ENCODE measurements at regions of chr1 and their contacts with region 1.

Region 1: DNA sequence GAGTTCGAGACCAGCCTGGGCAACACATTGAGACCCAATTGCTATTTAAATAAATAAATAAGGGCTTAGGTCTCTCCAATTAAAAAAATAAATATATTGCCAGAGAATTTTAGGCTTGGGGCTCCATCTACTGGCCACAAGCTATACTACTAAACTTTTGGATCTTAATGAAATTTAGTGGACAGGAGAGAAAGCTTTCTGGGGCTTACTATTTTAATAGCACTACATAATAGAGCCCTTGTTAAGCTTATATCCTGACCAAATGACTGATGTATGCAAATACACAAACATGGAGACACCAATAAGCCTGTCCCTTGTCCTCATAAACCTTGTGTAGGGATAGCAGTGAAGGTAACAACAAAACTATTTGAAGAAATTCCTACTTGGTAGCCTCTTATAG is 18.4 kb downstream of the CCT3 start:
- DNase-seq: peak in 3 of 5 donors; percentile 13 to 33 (median 27)
- H3K4me3 ChIP-seq: no peak overlapping the region
- H3K4me3 Mint-ChIP-seq: no peak overlapping the region
- H3K27ac ChIP-seq: no peak overlapping the region
- H3K27ac Mint-ChIP-seq: no peak overlapping the region
- H3K4me1 ChIP-seq: no peaks in the 10 kb centered on the region
- H3K4me1 Mint-ChIP-seq: peaks cover 0 to 2% (median 0%) of the 10 kb centered on the region in 4 donors
- H3K27me3 ChIP-seq: no peaks in the 10 kb centered on the region
- H3K27me3 Mint-ChIP-seq: no peaks in the 10 kb centered on the region

Region 2: DNA sequence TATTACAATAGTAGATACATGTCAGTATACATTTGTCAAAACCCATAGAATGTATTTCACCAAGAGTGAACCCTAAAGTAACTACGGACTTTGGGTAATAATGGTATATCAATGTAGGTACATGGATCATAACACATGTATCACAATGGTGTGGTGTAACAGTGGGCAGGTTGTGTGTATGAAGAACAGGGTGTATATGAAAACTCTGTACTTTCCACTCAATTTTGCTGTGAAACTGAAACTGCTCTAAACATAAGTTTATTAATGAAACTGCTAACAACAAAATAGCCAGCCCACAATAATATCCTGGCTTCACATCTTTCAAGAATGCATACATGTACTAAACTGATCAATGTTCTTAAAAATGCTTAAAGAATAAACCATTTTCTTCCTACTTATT is 908.7 kb before region 1 on chr1:
- CTCF ChIA-PET with region 1: no interaction called
- POLR2A ChIA-PET with region 1: no interaction called
- intact Hi-C with region 1: no loop called
- DNase-seq: no peak
- H3K4me3 ChIP-seq: no peak overlapping the region
- H3K4me3 Mint-ChIP-seq: no peak overlapping the region
- H3K27ac ChIP-seq: no peak overlapping the region
- H3K27ac Mint-ChIP-seq: peak overlapping the region in 1 of 7 donors; percentile 51
- H3K4me1 ChIP-seq: no peaks in the 10 kb centered on the region
- H3K4me1 Mint-ChIP-seq: no peaks in the 10 kb centered on the region
- H3K27me3 ChIP-seq: no peaks in the 10 kb centered on the region
- H3K27me3 Mint-ChIP-seq: no peaks in the 10 kb centered on the region

Region 3: DNA sequence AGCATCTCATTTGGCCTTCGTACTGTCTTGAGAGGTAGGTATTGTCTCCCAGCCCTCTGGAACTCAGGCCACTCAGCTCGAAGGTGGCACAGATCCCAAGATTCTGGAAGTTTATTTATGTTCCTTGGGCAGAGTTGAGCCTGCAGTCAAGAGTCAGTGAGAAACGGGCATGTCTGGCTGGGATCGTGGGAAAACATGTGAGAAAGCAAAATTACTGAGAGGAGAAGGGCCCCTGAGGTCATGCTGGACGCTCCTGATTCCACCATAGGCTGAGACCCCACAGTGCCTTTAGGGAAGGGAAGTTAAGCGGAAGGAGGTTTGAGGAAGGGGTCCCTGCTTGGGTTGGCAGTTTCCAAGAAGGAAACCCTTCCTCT is 178.8 kb before region 1 on chr1:
- CTCF ChIA-PET with region 1: interaction called, 15 read pairs
- POLR2A ChIA-PET with region 1: no interaction called
- intact Hi-C with region 1: loop called (anchors 2 kb)
- DNase-seq: peak in 1 of 5 donors; percentile 41
- H3K4me3 ChIP-seq: no peak overlapping the region
- H3K4me3 Mint-ChIP-seq: no peak overlapping the region
- H3K27ac ChIP-seq: no peak overlapping the region
- H3K27ac Mint-ChIP-seq: peak overlapping the region in 5 of 7 donors; percentile 28 to 88 (median 43)
- H3K4me1 ChIP-seq: peaks cover 3% of the 10 kb centered on the region
- H3K4me1 Mint-ChIP-seq: peaks cover under 1 to 18% (median 2%) of the 10 kb centered on the region in 4 donors
- H3K27me3 ChIP-seq: no peaks in the 10 kb centered on the region
- H3K27me3 Mint-ChIP-seq: no peaks in the 10 kb centered on the region

Region 4: GRCh38 chr1:156146020-156146768 is 173.5 kb before region 1 on chr1:
- CTCF ChIA-PET with region 1: interaction called, 15 read pairs
- POLR2A ChIA-PET with region 1: no interaction called
- intact Hi-C with region 1: loop called (anchors 2 kb)
- DNase-seq: peak; percentile 61 to 76 (median 73)
- H3K4me3 ChIP-seq: no peak overlapping the region
- H3K4me3 Mint-ChIP-seq: peak overlapping the region; percentile 60 to 87 (median 76)
- H3K27ac ChIP-seq: no peak overlapping the region
- H3K27ac Mint-ChIP-seq: peak overlapping the region in 6 of 7 donors; percentile 72 to 92 (median 80)
- H3K4me1 ChIP-seq: peaks cover 11% of the 10 kb centered on the region
- H3K4me1 Mint-ChIP-seq: peaks cover 8 to 22% (median 13%) of the 10 kb centered on the region in 4 donors
- H3K27me3 ChIP-seq: no peaks in the 10 kb centered on the region
- H3K27me3 Mint-ChIP-seq: peaks cover 0 to 3% of the 10 kb centered on the region in 2 donors

Measured in CD4-positive, alpha-beta memory T cell (primary cell).